ENCODE measurements at regions of chr6 and their contacts with region 1.

Region 1: DNA sequence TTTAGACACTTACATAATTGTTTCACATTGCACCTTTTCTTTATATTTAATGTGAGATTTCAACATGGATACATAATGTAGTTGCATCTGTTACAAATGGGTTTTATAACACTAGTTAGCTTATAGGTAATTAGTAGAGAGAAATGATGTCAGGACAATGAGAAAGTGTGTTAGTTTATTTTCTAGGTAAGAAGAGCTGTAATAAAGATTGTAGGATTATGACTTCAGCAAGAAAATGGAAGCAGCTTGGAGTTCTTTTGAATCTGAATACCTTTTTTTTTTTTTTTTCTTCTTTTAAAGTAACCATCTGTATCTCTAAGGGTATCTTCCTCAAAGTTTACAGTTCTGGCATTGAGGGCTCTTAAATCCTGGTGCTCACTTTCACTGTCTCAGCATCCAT is 35.3 kb downstream of the CD2AP start:
- DNase-seq: no peak
- H3K4me3 ChIP-seq: no peak overlapping the region
- H3K27me3 ChIP-seq: no peaks in the 10 kb centered on the region
- CTCF ChIP-seq: no peak

Region 2: DNA sequence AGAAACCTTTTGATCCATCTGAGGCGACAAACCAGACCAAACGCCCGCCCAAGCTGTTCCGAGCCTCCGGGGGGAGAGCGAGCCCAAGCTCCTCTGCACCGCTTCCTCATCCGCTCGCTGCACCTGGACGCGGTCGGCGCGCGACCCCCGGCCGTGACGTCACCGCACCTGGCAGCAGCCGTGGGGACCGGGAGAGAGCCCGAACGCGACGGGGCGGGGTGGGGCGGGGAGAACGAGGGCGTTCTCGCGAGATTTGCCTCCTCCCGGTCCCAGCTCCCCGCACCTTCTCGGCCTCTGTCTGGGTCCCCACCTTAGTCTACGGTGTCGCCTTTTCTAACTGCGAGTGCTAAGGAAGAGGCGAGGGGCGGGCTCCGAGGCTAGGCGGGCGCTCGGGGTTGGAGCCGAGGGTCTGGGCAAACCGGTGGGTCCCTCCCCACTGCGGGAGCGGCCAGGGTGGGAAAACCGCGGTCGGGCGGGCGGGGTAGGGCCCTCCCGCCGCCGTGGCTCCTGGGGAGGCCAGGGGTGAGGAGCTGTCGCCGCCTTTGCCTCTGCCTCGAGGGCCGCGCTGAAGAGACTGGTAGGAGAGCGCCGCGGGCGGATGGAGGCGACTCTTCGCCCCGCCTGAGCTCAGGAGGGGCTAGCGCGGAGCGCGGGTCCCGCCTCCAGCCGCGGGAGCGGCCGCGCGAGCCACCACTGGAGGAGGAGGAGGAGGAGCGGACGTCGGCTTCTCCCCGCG is 35.2 kb before region 1 on chr6 and contains the start of gene CD2AP:
- CTCF ChIA-PET with region 1: no interaction called
- POLR2A ChIA-PET with region 1: no interaction called
- DNase-seq: no peak
- H3K4me3 ChIP-seq: peak within 1 kb of the TSS; percentile 93
- H3K27me3 ChIP-seq: no peaks in the 10 kb centered on the region
- CTCF ChIP-seq: 0 out of 2 replicates have a peak, but pooled peaks have one; percentile 3
- polyA plus RNA-seq, gene CD2AP: 2.2 and 5.8 TPM in 2 replicates

Region 3: GRCh38 chr6:47495954-47496545 is 16.8 kb before region 1 on chr6:
- CTCF ChIA-PET with region 1: no interaction called
- POLR2A ChIA-PET with region 1: interaction called, 12 read pairs
- DNase-seq: no peak
- H3K4me3 ChIP-seq: no peak overlapping the region
- H3K27me3 ChIP-seq: no peaks in the 10 kb centered on the region
- CTCF ChIP-seq: no peak

Region 4: DNA sequence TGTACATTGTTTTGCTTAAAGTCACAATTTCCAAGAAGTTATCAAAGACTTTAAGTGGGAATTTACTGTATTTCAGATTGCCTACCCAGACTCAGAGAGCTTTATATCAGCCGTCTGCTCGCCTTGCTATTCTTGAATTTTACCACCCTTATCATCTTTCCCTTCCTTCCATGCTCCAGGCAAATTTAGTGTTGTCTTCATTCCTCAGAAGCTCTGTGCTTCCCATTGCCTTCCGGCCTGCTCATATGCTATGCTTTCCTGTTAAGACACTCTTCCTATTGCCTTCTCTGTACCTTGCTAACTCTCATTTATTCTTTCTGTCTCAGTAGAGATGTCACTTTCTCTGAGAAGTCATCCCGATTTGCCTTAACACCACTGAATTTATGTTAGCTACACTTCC is 16.9 kb after region 1 on chr6:
- CTCF ChIA-PET with region 1: no interaction called
- POLR2A ChIA-PET with region 1: no interaction called
- DNase-seq: no peak
- H3K4me3 ChIP-seq: no peak overlapping the region
- H3K27me3 ChIP-seq: no peaks in the 10 kb centered on the region
- CTCF ChIP-seq: no peak